Endothelial cell of umbilical vein (primary cell): ENCODE measurements at regions of chr6 and their contacts with region 1.

Region 1: GRCh38 chr6:84764332-84765049 is at the start of gene TBX18:
- DNase-seq: peak; percentile 99
- H3K4me3 ChIP-seq: peak within 1 kb of the TSS; percentile 63 to 95 (median 68)
- H3K27ac ChIP-seq: peak within 1 kb of the TSS; percentile 79
- H3K4me1 ChIP-seq: peaks cover 34% of the 10 kb centered on the region
- H3K27me3 ChIP-seq: peaks cover 27 to 38% of the 10 kb centered on the region in 2 experiments
- CTCF ChIP-seq: peak in 1 of 2 donors; percentile 25
- POLR2A ChIP-seq: peak; percentile 88
- total RNA-seq, gene TBX18: 28.4 and 35.3 TPM in 2 replicates

Region 2: GRCh38 chr6:83884523-83884922 is 880.0 kb before region 1 on chr6:
- CTCF ChIA-PET with region 1: no interaction called
- POLR2A ChIA-PET with region 1: no interaction called
- dilution Hi-C with region 1: no loop called
- intact Hi-C with region 1: loop called (anchors 1 kb)
- DNase-seq: peak; percentile 84
- H3K4me3 ChIP-seq: no peak overlapping the region
- H3K27ac ChIP-seq: no peak overlapping the region
- H3K4me1 ChIP-seq: peaks cover 9% of the 10 kb centered on the region
- H3K27me3 ChIP-seq: no peaks in the 10 kb centered on the region
- CTCF ChIP-seq: peak; percentile 41 to 59
- POLR2A ChIP-seq: no peak

Region 3: GRCh38 chr6:84568971-84569370 is 195.5 kb before region 1 on chr6:
- CTCF ChIA-PET with region 1: interaction called, 11 read pairs
- POLR2A ChIA-PET with region 1: no interaction called
- dilution Hi-C with region 1: no loop called
- intact Hi-C with region 1: no loop called
- DNase-seq: peak; percentile 64
- H3K4me3 ChIP-seq: no peak overlapping the region
- H3K27ac ChIP-seq: no peak overlapping the region
- H3K4me1 ChIP-seq: no peaks in the 10 kb centered on the region
- H3K27me3 ChIP-seq: no peaks in the 10 kb centered on the region
- CTCF ChIP-seq: peak in 1 of 2 donors; percentile 30
- POLR2A ChIP-seq: no peak

Region 4: DNA sequence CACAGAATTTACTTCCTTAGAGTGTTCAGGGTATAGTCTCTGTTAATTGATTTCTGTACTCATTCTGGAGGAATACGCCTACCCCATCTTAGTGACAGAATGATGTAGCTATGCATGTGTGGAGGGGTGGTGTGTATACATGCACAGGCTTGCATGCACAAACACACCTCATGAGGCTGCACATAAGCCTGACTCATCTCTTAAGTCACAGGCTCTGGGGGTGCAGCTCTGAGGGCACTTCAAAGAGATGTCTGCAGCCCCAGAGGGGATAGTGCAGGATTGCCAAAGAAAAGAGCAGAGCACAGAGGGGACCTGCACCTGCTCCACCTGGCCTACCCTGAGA is 24.7 kb before region 1 on chr6:
- CTCF ChIA-PET with region 1: interaction called, 10 read pairs
- POLR2A ChIA-PET with region 1: no interaction called
- dilution Hi-C with region 1: no loop called
- intact Hi-C with region 1: no loop called
- DNase-seq: no peak
- H3K4me3 ChIP-seq: no peak overlapping the region
- H3K27ac ChIP-seq: no peak overlapping the region
- H3K4me1 ChIP-seq: peaks cover 9% of the 10 kb centered on the region
- H3K27me3 ChIP-seq: no peaks in the 10 kb centered on the region
- CTCF ChIP-seq: no peak
- POLR2A ChIP-seq: no peak

Region 5: DNA sequence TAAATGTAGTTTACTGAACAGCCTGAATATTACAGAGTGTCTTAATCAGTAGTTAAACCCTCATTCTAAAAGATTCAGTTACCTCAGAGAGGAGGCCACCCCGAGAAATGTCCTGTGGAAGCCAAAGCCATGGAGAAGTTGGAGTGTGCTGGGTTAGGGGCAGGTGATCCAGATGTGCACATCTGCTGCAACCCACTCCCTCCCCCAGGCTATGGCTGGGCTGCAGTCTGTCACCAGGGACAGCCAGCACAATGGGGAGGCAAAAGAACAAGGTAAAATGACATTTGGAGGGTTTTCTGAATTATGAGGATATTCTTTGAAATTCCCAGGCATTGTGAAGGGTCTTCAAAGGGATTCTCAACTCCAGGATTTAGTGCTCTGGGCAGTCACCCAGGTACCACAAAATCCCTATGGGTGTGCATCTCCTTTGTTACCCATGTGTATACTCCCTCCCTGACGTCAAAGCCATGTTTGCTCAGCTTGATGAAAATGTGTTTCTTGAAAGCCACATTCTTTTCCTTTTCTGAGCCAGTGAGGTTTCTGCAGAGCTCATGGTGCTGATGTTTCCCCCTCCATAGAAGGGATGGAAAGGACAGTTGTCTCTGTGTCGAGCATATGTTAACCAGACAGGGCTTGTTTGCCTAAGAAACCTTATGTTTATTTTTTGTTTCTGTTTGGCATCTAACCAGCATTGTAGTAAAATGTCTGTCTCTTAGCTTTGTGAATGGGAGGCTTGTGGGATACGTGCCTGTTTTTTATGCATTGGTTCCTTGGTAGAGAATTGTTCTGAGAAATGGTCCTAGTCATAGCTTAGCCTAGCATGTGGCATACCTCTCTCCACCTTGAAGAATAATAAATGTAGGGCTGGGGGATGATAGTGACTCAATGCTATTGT is 212.3 kb after region 1 on chr6:
- CTCF ChIA-PET with region 1: no interaction called
- POLR2A ChIA-PET with region 1: interaction called, 3 read pairs
- dilution Hi-C with region 1: no loop called
- intact Hi-C with region 1: loop called (anchors 1 kb)
- DNase-seq: peak; percentile 71
- H3K4me3 ChIP-seq: no peak overlapping the region
- H3K27ac ChIP-seq: no peak overlapping the region
- H3K4me1 ChIP-seq: peaks cover 32% of the 10 kb centered on the region
- H3K27me3 ChIP-seq: no peaks in the 10 kb centered on the region
- CTCF ChIP-seq: no peak
- POLR2A ChIP-seq: no peak

Region 6: GRCh38 chr6:85404502-85405174 is 640.1 kb after region 1 on chr6:
- CTCF ChIA-PET with region 1: no interaction called
- POLR2A ChIA-PET with region 1: no interaction called
- dilution Hi-C with region 1: no loop called
- intact Hi-C with region 1: loop called (anchors 10 kb)
- DNase-seq: peak; percentile 93
- H3K4me3 ChIP-seq: peak overlapping the region in 1 of 3 experiments; percentile 14
- H3K27ac ChIP-seq: peak overlapping the region; percentile 94
- H3K4me1 ChIP-seq: peaks cover 55% of the 10 kb centered on the region
- H3K27me3 ChIP-seq: no peaks in the 10 kb centered on the region
- CTCF ChIP-seq: no peak
- POLR2A ChIP-seq: peak; percentile 43